AG04449 (cell line): ENCODE measurements at regions of chr2 and their contacts with region 1.

Region 1: DNA sequence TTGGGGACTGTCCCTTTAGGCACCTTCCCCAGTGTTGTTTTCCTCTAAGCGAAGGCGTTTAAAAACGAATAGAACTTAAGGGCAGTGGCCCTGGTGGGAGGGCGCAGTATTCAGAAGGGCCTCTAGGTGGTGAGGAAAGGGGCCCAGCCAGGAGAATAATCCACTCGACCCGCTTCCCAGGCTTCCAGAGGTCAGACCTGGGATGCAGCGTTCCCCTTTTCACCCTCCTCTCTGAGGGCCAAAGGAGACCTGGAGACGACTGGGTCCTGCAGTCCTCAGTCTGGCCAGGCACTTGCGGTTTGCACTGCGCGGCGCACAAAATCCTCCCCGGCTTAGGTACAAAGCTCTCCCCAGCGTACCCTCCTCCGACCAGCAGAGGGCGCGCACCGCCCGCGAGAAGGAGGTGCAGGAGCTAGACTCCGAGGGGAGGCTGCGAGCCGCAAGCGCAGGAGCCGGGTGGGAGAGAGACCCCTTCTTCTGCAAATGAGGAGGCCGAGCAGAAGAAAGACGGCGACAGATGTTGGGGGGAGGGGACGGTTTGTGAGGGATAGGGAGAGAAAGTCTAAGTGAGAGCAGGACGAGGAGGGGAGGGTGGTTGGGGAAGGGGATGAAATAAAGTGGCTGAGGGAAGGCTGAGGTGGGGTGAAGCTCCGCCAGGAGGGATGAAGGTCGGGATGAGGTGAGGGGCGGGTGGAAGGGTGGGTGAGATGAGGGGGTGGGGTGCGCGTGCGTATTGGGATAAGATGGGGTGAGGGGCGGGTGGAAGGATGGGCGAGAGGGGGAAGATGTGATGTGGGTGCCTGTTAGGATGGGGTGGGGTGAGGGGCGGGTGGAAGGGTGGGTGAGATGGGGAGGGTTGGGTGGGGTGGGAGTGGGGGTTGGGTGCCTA is 4.9 kb downstream of the FEV start:
- DNase-seq: no peak
- H3K4me3 ChIP-seq: peak overlapping the region; percentile 45
- CTCF ChIP-seq: peak; percentile 93

Region 2: GRCh38 chr2:218876562-218877219 is 103.4 kb before region 1 on chr2:
- CTCF ChIA-PET with region 1: interaction called, 20 read pairs
- POLR2A ChIA-PET with region 1: no interaction called
- DNase-seq: no peak
- H3K4me3 ChIP-seq: no peak overlapping the region
- CTCF ChIP-seq: peak; percentile 86

Region 3: DNA sequence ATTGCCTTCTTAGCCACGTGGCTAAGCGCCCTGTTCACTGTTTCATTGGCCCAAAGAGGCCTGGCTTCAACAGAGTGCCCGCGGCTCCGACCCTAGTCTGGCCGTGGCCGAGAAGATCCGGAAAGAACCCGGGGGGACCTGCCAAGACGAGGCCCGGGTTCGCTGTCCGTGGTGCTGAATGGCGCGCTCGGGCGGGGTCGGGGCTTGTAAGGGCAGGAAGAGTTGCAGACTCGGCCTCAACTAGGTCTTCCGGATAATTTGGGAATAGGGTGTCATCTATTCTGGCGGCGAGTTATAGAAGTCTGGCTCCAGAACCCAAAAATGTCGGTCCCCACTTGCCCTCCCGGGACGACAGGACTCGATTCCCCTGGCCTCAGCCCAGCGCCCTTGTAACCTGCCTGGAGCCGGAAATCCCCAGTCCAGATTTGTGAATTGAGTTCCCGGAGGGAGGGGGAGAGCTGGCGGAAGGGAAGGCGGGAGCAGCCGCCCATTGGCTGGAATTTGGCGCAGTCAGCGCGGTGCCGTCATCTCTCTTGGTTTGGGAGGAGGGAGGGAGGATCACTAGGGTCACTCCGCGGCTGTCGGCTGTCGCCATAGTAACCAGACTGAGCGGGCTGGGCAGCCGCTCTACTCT is 17.1 kb before region 1 on chr2:
- CTCF ChIA-PET with region 1: interaction called, 37 read pairs
- POLR2A ChIA-PET with region 1: no interaction called
- DNase-seq: no peak
- H3K4me3 ChIP-seq: no peak overlapping the region
- CTCF ChIP-seq: no peak

Region 4: GRCh38 chr2:219002395-219003266 is 22.5 kb after region 1 on chr2:
- CTCF ChIA-PET with region 1: interaction called, 227 read pairs
- POLR2A ChIA-PET with region 1: no interaction called
- DNase-seq: no peak
- H3K4me3 ChIP-seq: no peak overlapping the region
- CTCF ChIP-seq: peak; percentile 53

Region 5: GRCh38 chr2:219149667-219150066 is 169.6 kb after region 1 on chr2:
- CTCF ChIA-PET with region 1: interaction called, 53 read pairs
- POLR2A ChIA-PET with region 1: no interaction called
- DNase-seq: no peak
- H3K4me3 ChIP-seq: no peak overlapping the region
- CTCF ChIP-seq: no peak